Natural killer cell (primary cell): ENCODE measurements at regions of chr1 and their contacts with region 1.

Region 1: GRCh38 chr1:43974443-43975248 is at the start of gene ATP6V0B:
- DNase-seq: peak; percentile 94 to 96
- ATAC-seq: peak; percentile 74 to 88 (median 82)
- H3K4me3 ChIP-seq: peak within 1 kb of the TSS; percentile 96
- H3K4me3 Mint-ChIP-seq: peak within 1 kb of the TSS; percentile 97
- H3K27ac ChIP-seq: peak within 1 kb of the TSS; percentile 92
- H3K27ac Mint-ChIP-seq: peak within 1 kb of the TSS; percentile 91 to 92
- H3K4me1 ChIP-seq: peaks cover 56% of the 10 kb centered on the region
- H3K4me1 Mint-ChIP-seq: peaks cover 56 to 71% of the 10 kb centered on the region in 2 donors
- H3K27me3 ChIP-seq: no peaks in the 10 kb centered on the region
- H3K27me3 Mint-ChIP-seq: no peaks in the 10 kb centered on the region
- CTCF ChIP-seq: no peak
- total RNA-seq, gene ATP6V0B: 76.3 to 115 (median 113) TPM

Region 2: DNA sequence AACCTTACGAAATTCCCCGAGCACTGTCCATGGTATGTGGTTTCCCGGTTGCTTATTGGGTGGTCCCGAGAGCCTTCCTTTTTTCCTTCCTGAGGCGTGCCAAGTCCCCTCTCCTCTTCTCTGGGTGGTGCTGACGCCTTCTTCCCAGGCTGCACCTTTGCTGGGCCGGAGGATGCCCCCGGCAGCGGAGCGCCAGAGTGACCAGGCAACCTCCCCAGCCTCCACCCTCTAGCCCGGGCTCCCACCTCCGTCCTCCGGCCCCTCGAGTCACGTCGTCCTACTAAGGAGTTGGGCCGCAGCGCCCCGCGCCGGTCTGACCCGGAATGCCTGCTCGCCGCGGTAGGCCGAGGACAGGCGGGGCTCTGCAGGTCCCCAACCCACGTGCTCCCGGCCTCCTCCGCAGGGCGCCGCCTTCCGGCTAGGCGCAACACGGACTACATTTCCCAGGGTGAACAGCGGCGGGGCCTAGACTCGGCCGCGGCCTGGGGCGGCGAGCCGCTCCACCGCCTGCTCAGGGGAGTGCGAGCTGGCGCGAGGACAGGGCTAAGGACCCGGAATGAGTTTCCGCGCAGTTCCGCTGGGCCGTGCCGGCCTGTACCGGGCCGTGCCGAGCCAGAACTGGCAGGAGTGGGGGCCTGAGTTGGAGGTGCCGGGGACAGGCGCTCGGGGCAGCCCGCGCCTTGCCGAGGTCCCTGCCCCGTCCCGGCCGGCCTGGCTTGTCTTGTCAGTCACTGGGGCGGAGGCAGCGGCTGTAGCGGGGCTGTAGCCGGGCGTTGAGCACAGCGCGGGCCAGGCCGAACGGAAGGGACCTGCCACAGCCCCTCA is 28.2 kb before region 1 on chr1 and contains the start of gene IPO13:
- intact Hi-C with region 1: loop called (anchors 1 kb)
- DNase-seq: peak; percentile 95 to 97
- ATAC-seq: peak; percentile 94 to 99 (median 96)
- H3K4me3 ChIP-seq: peak within 1 kb of the TSS; percentile 54
- H3K4me3 Mint-ChIP-seq: peak within 1 kb of the TSS; percentile 91
- H3K27ac ChIP-seq: peak within 1 kb of the TSS; percentile 95
- H3K27ac Mint-ChIP-seq: peak within 1 kb of the TSS; percentile 88 to 98
- H3K4me1 ChIP-seq: peaks cover 33% of the 10 kb centered on the region
- H3K4me1 Mint-ChIP-seq: peaks cover 35 to 64% of the 10 kb centered on the region in 2 donors
- H3K27me3 ChIP-seq: no peaks in the 10 kb centered on the region
- H3K27me3 Mint-ChIP-seq: no peaks in the 10 kb centered on the region
- CTCF ChIP-seq: peak; percentile 57
- total RNA-seq, gene IPO13: 18.1 to 22.7 (median 18.4) TPM

Region 3: DNA sequence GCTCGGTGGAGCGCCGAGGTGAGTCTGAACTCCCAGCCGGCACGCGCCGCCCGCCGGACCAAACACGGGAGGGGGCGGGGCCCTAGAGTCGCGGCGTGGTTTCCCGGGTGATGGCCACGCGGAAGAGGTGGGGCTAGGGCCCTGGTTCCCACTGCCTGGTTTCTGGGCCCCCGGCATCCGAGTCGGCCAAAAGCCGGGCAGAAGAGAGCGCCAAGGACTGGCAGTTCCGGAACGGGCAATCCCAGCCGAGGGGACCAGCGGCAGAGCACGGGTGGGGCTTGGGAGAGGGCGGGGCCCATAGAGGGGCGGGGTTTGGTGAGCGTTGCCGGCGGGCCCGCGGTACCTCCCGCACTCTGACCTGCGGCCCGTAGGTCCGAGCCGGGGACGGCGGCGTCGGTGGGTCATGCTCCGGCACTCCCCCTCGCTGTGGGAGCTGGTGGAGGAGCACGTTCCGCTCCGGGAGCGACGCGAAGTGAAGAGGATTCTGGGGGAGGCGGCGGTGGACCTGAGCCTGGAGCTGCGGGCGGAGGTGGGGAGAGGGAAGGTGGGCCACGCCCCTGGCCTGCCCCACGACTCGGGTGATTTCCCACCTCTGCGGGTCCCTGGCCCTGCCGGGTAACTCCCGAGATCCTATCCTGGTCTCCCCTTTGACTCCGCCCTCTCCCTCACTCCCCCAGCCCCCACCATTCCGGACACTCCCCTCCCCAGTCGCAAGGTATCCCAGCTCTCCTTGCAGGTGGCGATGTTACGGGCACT is 17.0 kb after region 1 on chr1 and contains the start of gene CCDC24:
- intact Hi-C with region 1: loop called (anchors 1 kb)
- DNase-seq: peak; percentile 80 to 83
- ATAC-seq: peak; percentile 89 to 95 (median 91)
- H3K4me3 ChIP-seq: peak within 1 kb of the TSS; percentile 74
- H3K4me3 Mint-ChIP-seq: peak within 1 kb of the TSS; percentile 93
- H3K27ac ChIP-seq: peak within 1 kb of the TSS; percentile 41
- H3K27ac Mint-ChIP-seq: peak within 1 kb of the TSS; percentile 37 to 93
- H3K4me1 ChIP-seq: peaks cover 16% of the 10 kb centered on the region
- H3K4me1 Mint-ChIP-seq: peaks cover 4 to 19% of the 10 kb centered on the region in 2 donors
- H3K27me3 ChIP-seq: no peaks in the 10 kb centered on the region
- H3K27me3 Mint-ChIP-seq: no peaks in the 10 kb centered on the region
- CTCF ChIP-seq: no peak
- total RNA-seq, gene CCDC24: 3.8 to 5.2 (median 3.9) TPM